Activated T-helper 1 cell treated with anti-CD3 and anti-CD28 coated beads, Interleukin-12 subunit alpha, Interleukin-12 subunit beta, Interleukin-2, Interleukin-4 antibody, amounts not matched to agents 30 ng/mL and 10 ng/mL and 1 ng/mL, durations not matched to agents 14 hours and 24 hours and 36 hours (primary cell): ENCODE measurements at regions of chr11 and their contacts with region 1.

Region 1: DNA sequence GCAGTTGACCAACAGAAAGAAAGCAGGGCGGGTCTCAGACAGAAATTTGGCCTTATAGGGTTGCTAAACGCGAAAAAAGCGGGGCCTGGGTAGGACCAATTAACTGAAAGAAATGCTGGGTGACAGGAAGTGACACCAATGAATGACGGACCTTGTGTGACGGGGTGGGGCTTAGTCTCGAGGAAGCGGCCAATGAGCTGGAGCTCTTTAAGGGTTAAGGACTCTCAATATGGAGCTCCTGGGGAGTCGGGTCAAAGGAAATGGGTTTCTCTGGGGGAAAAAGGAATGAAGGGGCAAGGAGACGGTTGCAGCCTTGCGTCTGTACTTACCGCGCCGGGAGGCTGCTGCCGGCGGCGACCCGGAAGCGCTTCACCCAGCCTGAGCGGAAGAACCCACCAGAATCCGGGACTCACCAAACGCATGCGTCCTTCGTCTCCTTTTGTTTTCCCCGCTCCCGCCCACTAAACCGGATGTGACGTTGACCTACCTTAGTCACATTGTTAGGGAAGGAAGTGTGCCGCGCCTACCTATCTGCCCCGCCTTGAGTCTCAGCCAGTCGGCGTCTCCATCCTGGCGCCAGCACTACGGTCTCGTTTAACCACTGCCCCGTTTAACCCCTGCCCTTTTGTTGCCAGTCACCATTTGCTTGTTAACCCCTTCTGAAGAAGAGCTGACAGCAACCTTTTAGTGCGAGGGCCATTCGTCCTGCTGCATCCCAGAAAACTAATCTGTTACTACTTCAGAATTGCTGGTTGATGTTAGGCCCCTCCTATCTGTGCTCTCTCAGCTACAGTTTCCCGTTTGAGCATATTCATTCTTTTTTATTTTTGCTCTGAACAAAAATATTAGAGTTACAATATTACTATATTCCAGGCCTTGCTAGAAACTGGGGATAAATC is at the start of gene ANAPC15:
- DNase-seq: peak; percentile 97
- H3K4me3 Mint-ChIP-seq: peak within 1 kb of the TSS; percentile 90
- H3K27ac Mint-ChIP-seq: peak within 1 kb of the TSS; percentile 98
- H3K4me1 Mint-ChIP-seq: peaks cover 28% of the 10 kb centered on the region
- H3K27me3 Mint-ChIP-seq: no peaks in the 10 kb centered on the region
- total RNA-seq, gene ANAPC15: 49.4 and 51.9 TPM in 2 replicates

Region 2: GRCh38 chr11:71787098-71787823 is 325.3 kb before region 1 on chr11:
- intact Hi-C with region 1: loop called (anchors 1 kb)
- DNase-seq: peak; percentile 91
- H3K4me3 Mint-ChIP-seq: peak overlapping the region; percentile 97
- H3K27ac Mint-ChIP-seq: peak overlapping the region; percentile 97
- H3K4me1 Mint-ChIP-seq: peaks cover 23% of the 10 kb centered on the region
- H3K27me3 Mint-ChIP-seq: no peaks in the 10 kb centered on the region

Region 3: DNA sequence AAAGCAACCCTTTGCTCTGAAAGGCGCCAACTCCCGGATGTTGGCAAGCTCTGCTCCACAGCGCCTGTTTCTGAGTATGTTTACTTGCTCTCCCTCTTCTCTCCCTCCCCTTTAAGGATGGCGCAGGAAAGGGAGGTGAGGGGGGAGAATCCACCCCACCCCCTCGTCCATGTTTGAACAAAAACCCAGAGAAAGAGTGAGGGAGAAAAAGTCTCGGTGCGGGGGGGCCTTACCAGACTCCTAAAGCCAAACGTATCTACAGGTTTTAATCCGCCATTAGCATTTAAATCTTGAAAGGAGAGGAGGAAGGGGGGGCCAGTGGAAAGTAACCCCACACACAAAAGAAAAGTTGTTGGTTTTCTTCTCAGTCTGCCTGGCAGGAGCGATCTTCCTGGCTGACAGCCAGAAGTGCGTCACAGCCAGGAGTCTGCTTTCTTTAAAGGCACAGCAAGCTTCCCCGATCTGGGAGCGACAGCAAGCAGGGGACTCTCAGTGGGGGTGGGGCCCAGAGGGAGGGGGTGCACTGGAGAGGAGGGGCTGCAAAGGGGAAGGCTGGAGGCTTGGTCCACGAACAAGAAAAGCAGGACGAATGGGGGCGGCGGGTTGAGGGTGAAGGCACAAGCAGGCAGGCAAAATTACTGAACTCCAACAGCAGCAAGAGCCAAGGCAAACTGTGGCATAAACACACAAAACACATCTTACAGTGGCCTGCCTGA is 71.7 kb before region 1 on chr11:
- intact Hi-C with region 1: loop called (anchors 1 kb)
- DNase-seq: peak; percentile 59
- H3K4me3 Mint-ChIP-seq: no peak overlapping the region
- H3K27ac Mint-ChIP-seq: no peak overlapping the region
- H3K4me1 Mint-ChIP-seq: peaks cover 23% of the 10 kb centered on the region
- H3K27me3 Mint-ChIP-seq: no peaks in the 10 kb centered on the region